MCF 10A (cell line): ENCODE measurements at regions of chr4 and their contacts with region 1.

Region 1: GRCh38 chr4:6640292-6641163 is at the start of gene MRFAP1:
- DNase-seq: peak; percentile 95
- H3K4me3 Mint-ChIP-seq: peak within 1 kb of the TSS; percentile 99
- H3K27ac Mint-ChIP-seq: peak within 1 kb of the TSS; percentile 95
- H3K4me1 Mint-ChIP-seq: peaks cover 24% of the 10 kb centered on the region
- H3K27me3 Mint-ChIP-seq: no peaks in the 10 kb centered on the region
- CTCF ChIP-seq: no peak
- total RNA-seq, gene MRFAP1: 387 and 481 TPM in 2 replicates

Region 2: DNA sequence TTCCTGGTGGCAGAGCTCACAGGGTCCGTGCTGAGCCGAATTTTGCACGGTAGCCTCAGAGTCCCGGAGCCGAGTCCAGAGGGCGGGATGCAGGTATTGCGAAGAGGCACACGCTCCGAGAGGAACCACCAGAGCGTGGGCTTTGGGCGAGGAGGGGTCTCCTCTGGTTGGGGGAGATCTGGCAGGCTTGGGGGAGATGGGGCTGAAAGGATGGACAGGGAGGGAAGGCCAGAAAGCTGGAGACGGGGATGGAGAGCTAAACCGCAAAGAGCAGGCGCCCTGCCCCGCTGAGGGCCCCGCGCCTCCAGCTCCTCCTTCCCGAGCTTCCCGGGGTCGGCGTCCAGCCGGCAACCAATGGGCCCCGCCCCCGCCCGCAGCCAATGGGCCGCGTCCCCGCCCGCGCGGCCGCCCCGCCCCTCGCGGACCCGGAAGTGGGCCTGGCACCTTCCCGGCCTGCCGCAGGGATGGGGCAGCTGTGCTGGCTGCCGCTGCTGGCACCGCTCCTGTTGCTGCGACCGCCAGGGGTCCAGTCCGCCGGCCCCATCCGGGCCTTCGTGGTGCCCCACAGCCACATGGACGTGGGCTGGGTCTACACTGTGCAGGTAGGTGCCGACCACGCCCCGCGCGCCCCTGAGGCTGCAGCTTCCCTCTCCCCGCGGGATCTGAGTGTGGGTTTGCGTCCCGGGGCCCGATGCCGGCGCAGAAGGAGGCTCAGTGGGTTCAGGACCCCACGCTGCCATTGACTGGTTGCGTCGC is 65.6 kb before region 1 on chr4 and contains the start of gene MAN2B2:
- CTCF ChIA-PET with region 1: no interaction called
- POLR2A ChIA-PET with region 1: interaction called, 19 read pairs
- intact Hi-C with region 1: no loop called
- DNase-seq: peak; percentile 79
- H3K4me3 Mint-ChIP-seq: peak within 1 kb of the TSS; percentile 76
- H3K27ac Mint-ChIP-seq: peak within 1 kb of the TSS; percentile 73
- H3K4me1 Mint-ChIP-seq: no peaks in the 10 kb centered on the region
- H3K27me3 Mint-ChIP-seq: no peaks in the 10 kb centered on the region
- CTCF ChIP-seq: no peak
- total RNA-seq, gene MAN2B2: 12.5 and 13.9 TPM in 2 replicates

Region 3: GRCh38 chr4:6658597-6659075 is 18.1 kb after region 1 on chr4:
- CTCF ChIA-PET with region 1: interaction called, 5 read pairs
- POLR2A ChIA-PET with region 1: interaction called, 27 read pairs
- intact Hi-C with region 1: no loop called
- DNase-seq: no peak
- H3K4me3 Mint-ChIP-seq: no peak overlapping the region
- H3K27ac Mint-ChIP-seq: no peak overlapping the region
- H3K4me1 Mint-ChIP-seq: no peaks in the 10 kb centered on the region
- H3K27me3 Mint-ChIP-seq: no peaks in the 10 kb centered on the region
- CTCF ChIP-seq: no peak

Region 4: DNA sequence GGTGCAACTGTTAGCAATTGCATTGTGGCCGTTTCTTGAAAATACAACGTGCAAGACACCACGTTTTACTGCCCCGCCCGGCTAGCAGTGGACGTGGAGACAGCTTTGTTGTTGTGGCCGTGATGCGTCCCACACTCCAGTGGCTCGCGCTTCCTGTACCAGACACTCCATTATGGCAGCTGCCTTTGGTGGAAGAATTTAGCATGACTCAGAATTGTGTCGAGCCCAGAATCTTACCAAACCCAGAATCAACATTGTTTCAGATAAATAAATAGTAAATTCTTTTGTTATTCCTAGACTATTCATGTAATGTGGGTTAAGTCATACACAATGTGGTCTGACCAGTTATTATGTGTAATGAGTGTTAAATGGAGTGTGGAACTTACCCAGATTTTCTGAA is 27.9 kb after region 1 on chr4:
- CTCF ChIA-PET with region 1: interaction called, 7 read pairs
- POLR2A ChIA-PET with region 1: interaction called, 100 read pairs
- intact Hi-C with region 1: no loop called
- DNase-seq: peak; percentile 47
- H3K4me3 Mint-ChIP-seq: no peak overlapping the region
- H3K27ac Mint-ChIP-seq: no peak overlapping the region
- H3K4me1 Mint-ChIP-seq: no peaks in the 10 kb centered on the region
- H3K27me3 Mint-ChIP-seq: no peaks in the 10 kb centered on the region
- CTCF ChIP-seq: no peak

Region 5: GRCh38 chr4:6673660-6674499 is 33.4 kb after region 1 on chr4:
- CTCF ChIA-PET with region 1: interaction called, 7 read pairs
- POLR2A ChIA-PET with region 1: interaction called, 100 read pairs
- intact Hi-C with region 1: no loop called
- DNase-seq: peak; percentile 93
- H3K4me3 Mint-ChIP-seq: peak overlapping the region; percentile 88
- H3K27ac Mint-ChIP-seq: peak overlapping the region; percentile 71
- H3K4me1 Mint-ChIP-seq: peaks cover 22% of the 10 kb centered on the region
- H3K27me3 Mint-ChIP-seq: no peaks in the 10 kb centered on the region
- CTCF ChIP-seq: no peak

Region 6: DNA sequence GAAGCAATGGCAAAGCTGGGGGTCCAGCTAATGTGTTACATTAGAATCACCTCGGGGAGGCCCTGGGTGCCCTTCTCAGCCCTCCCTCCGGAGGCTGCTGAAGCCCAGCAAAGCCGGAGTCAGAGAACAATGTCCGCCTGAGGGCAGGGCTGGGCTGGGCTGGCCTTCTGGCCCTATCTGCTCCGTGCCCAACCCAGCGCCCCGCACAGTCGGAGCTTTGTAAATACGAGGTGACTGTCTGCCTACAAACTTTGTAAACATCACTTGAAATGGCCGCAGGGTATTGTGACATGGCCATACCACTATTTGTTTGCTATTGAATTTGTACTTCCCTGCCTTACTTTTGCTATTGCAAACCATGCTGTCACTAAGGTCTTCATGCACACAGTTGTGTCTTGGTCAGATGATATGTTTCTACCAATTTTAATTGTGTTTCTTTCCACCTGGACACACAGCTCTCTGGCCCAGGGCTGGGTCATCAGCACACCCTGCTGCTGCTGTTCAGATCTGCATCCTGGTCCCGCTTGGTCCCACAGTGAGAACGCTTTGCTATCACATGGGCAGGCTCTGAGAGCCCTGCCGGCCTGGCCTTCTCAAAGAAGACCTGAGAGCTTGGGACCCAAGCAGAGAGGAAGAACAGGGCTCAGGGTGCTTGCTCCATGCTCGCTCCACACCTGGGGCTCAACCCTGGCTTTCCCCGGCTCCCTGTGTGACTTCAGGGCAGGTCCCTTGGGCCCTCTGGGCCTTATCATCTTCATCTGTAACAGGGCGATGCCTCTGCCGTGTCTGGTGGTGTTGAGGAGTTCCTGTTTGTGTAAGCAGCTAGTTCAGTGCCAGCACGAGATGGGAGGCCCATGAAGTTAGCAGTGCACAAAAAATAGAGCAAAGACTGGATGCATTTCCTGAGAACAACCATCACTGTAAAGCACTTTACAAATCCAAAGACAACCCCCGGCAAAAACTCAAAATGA is 55.4 kb after region 1 on chr4:
- CTCF ChIA-PET with region 1: no interaction called
- POLR2A ChIA-PET with region 1: interaction called, 23 read pairs
- intact Hi-C with region 1: no loop called
- DNase-seq: peak; percentile 77
- H3K4me3 Mint-ChIP-seq: peak overlapping the region; percentile 47
- H3K27ac Mint-ChIP-seq: peak overlapping the region; percentile 95
- H3K4me1 Mint-ChIP-seq: peaks cover 37% of the 10 kb centered on the region
- H3K27me3 Mint-ChIP-seq: no peaks in the 10 kb centered on the region
- CTCF ChIP-seq: peak; percentile 20

Region 7: DNA sequence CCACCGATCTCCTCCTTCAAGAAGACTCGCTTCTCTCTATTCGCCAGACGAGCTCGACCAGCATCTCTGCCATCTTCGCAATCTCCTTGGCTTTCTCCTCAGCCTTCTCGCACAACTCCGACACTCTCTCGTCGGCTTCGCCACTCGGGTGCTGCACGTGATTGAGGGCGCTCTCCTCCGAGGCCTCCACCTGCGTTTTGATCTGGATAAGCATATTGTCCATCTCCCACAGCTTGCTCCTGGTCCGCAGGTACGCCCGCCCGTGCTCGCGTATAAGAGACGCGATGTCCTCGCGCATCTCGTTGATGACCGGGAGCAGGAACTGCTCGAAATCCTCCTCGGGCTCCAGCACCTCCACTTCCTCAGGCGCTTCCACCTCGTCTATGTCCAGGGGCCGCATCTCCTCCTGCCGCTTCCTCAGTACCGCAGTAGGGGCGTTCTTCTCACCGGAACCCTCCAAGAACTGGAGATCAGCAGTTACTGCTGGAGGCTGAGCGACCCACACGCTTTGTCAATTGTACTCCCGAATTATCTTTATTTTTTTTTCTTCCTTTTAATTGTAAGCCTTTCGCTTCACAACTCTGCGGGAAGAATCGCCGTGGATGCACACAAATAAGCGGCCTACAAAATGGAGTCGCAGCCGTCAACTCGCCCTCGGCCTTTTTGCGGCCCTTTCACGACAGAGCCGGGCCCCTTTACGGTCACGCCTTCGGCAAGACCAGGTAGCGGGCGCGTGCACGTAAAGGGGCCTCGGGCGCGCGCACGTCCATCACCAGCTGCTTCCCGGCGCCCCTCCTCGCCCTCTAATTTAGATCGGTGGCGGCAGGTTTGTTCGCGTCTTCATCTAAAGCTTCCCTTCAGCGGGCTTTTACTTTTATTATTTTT is 68.9 kb after region 1 on chr4 and contains the start of gene MRFAP1L1:
- CTCF ChIA-PET with region 1: no interaction called
- POLR2A ChIA-PET with region 1: interaction called, 47 read pairs
- intact Hi-C with region 1: no loop called
- DNase-seq: peak; percentile 96
- H3K4me3 Mint-ChIP-seq: peak within 1 kb of the TSS; percentile 98
- H3K27ac Mint-ChIP-seq: peak within 1 kb of the TSS; percentile 98
- H3K4me1 Mint-ChIP-seq: peaks cover 46% of the 10 kb centered on the region
- H3K27me3 Mint-ChIP-seq: no peaks in the 10 kb centered on the region
- CTCF ChIP-seq: peak; percentile 6
- total RNA-seq, gene MRFAP1L1: 42.5 and 63.2 TPM in 2 replicates